Activated T-helper 1 cell treated with anti-CD3 and anti-CD28 coated beads, Interleukin-12 subunit alpha, Interleukin-12 subunit beta, Interleukin-2, Interleukin-4 antibody, amounts not matched to agents 30 ng/mL and 10 ng/mL and 1 ng/mL, durations not matched to agents 14 hours and 24 hours and 36 hours (primary cell): ENCODE measurements at regions of chr22 and their contacts with region 1.

Region 1: DNA sequence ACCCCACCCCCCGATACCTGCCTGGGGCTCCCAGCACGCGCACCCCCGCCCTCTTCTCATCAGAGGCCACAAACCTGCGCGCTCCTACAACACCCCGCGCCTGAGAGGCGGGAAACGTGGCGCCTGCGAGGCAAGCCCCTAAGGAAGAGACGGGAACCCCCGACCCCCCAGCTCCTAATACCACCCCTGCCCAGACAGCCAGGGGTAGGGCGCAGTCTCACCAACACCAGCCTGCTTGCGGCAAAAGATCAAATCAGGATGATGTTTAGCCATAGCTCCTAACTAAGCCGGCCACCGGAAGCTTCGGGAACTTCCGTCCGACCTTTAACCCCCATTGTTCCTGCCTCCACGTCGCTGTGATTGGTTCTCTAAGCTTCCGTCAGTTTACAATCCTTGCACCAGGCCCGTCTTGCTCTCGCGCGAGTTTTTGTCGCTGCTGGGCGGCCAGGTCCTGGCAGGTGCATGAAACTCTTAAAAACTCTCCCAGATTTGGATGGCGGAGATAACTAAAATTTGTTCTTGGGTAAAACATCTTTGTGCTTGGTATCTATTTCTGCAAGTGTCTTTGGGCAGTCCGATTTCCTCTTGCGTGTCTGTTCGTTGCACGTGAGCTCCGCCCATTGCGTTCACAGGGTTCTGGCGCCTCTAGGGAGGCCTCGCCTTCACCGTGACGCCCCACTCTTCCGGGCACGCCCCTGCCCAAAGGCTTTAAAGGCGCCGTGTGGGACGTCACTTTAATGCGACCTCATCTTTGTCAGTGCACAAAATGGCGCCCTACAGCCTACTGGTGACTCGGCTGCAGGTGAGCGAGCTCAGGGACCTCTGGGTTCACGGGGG is at the starts of genes ACO2 and PHF5A:
- DNase-seq: peak; percentile 98
- H3K4me3 Mint-ChIP-seq: peak within 1 kb of the TSS; percentile 87
- H3K27ac Mint-ChIP-seq: peak within 1 kb of the TSS; percentile 99
- H3K4me1 Mint-ChIP-seq: peaks cover 22% of the 10 kb centered on the region
- H3K27me3 Mint-ChIP-seq: no peaks in the 10 kb centered on the region
- total RNA-seq, gene ACO2: 99.1 and 101 TPM in 2 replicates
- total RNA-seq, gene PHF5A: 83.7 and 96.8 TPM in 2 replicates

Region 2: DNA sequence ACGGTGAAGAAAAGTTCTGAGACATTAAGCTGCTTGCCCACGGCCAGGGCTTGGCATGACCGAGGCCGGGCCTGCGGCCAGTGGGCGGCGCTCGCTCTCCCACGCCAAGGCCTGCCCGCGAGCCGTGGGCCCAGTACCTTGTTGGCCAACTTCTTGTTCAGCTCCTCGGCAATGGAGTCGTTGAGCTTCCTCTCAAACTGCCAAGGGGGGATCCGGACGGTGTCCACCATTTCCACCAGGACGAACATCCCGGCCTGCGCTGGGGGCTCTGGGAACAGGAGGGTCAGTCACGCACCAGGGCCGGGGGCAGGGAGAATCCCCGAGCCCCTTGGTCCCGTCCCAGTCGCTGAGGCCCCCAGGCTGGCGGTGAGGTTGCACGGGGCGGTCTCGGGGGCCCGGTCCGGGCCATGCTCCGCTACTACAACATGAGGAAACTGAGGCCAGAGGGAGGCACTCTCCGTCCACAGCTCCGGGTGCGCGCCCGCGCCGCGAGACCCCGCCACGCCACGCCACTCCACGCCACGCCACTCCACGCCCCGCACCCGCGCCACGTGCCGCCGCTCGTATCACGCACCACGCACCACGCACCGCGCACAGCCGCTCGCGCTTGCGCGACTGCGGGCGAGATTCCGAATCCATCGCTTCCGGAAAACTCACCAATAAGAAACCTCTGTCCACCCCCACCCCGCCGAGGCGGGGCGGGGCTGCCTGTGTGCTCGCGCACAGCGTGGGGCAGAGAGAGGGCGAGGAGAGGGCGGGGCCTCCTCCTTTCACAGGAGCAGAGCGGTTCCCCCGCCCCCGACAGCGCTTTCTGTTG is 75.5 kb after region 1 on chr22 and contains the start of gene POLR3H:
- intact Hi-C with region 1: loop called (anchors 1 kb)
- DNase-seq: peak; percentile 97
- H3K4me3 Mint-ChIP-seq: peak within 1 kb of the TSS; percentile 93
- H3K27ac Mint-ChIP-seq: peak within 1 kb of the TSS; percentile 84
- H3K4me1 Mint-ChIP-seq: peaks cover 40% of the 10 kb centered on the region
- H3K27me3 Mint-ChIP-seq: peaks cover 3% of the 10 kb centered on the region
- total RNA-seq, gene POLR3H: 51.8 and 52.0 TPM in 2 replicates